GM12878 (cell line): ENCODE measurements at regions of chr4 and their contacts with region 1.

Region 1: GRCh38 chr4:153432968-153433753 is 33.0 kb upstream of the TMEM131L start:
- DNase-seq: peak; percentile 99
- ATAC-seq: peak; percentile 91
- H3K4me3 ChIP-seq: peak overlapping the region; percentile 56
- H3K27ac ChIP-seq: peak overlapping the region; percentile 84
- H3K4me1 ChIP-seq: peaks cover 31% of the 10 kb centered on the region
- H3K27me3 ChIP-seq: no peaks in the 10 kb centered on the region
- CTCF ChIP-seq: peak; percentile 86 to 96 (median 93)
- EP300 ChIP-seq: peak; percentile 78
- POLR2A ChIP-seq: peak; percentile 57
- RAD21 ChIP-seq: peak; percentile 99

Region 2: GRCh38 chr4:152719801-152720556 is 713.2 kb before region 1 on chr4:
- CTCF ChIA-PET with region 1: no interaction called
- POLR2A ChIA-PET with region 1: no interaction called
- RAD21 ChIA-PET with region 1: no interaction called
- SMC1A ChIA-PET with region 1: no interaction called
- in situ Hi-C with region 1: no loop called
- intact Hi-C with region 1: no loop called
- DNase-seq: no peak
- ATAC-seq: no peak
- H3K4me3 ChIP-seq: no peak overlapping the region
- H3K27ac ChIP-seq: no peak overlapping the region
- H3K4me1 ChIP-seq: no peaks in the 10 kb centered on the region
- H3K27me3 ChIP-seq: 0 out of 4 replicates have a peak, but pooled peaks cover 0 to 2% of the 10 kb centered on the region in 2 experiments
- CTCF ChIP-seq: no peak
- EP300 ChIP-seq: no peak
- POLR2A ChIP-seq: no peak
- RAD21 ChIP-seq: no peak

Region 3: GRCh38 chr4:153521999-153522801 is 89.0 kb after region 1 on chr4:
- CTCF ChIA-PET with region 1: interaction called, 7 read pairs
- POLR2A ChIA-PET with region 1: interaction called, 6 read pairs
- RAD21 ChIA-PET with region 1: interaction called, 9 read pairs
- SMC1A ChIA-PET with region 1: interaction called, 13 read pairs
- in situ Hi-C with region 1: no loop called
- intact Hi-C with region 1: loop called (anchors 1 kb)
- DNase-seq: peak; percentile 71
- ATAC-seq: peak; percentile 54
- H3K4me3 ChIP-seq: peak overlapping the region; percentile 59
- H3K27ac ChIP-seq: peak overlapping the region; percentile 96
- H3K4me1 ChIP-seq: peaks cover 85% of the 10 kb centered on the region
- H3K27me3 ChIP-seq: no peaks in the 10 kb centered on the region
- CTCF ChIP-seq: no peak
- EP300 ChIP-seq: no peak; a peak in 1 of 4 replicates
- POLR2A ChIP-seq: peak; percentile 56; the same call in 1 of the 2 replicates
- RAD21 ChIP-seq: no peak

Region 4: DNA sequence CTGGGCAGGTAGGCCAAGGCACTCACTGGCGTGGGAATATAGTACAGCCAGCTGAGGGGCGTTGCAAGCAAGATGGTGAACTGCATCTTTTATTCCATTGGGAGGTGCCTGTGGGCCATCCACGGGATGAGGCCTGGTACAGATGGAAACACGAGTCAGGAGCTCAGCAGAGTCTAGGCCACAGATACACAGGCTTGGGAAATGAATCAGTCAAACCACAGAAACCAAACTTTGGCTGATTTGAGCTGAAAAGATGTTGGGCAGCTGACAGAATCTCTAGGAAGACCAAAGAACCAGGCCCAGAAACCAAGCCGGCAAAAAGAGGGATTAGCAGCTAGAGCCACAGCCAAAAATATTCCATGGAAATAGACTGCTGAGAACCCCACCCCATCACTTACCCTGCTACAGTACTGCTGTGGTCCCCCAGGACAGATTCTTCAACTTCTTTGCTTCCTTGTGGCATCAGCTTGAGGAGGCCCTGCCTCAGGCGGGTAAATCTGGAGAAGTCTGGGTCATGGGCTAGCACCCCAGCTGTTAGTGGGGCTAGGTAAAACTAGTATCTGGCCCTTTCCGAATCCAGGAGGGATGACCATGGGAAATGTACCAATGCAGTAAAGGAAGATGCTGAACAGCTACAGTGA is 108.4 kb after region 1 on chr4:
- CTCF ChIA-PET with region 1: interaction called, 6 read pairs
- POLR2A ChIA-PET with region 1: interaction called, 4 read pairs
- RAD21 ChIA-PET with region 1: interaction called, 14 read pairs
- SMC1A ChIA-PET with region 1: interaction called, 10 read pairs
- in situ Hi-C with region 1: no loop called
- intact Hi-C with region 1: no loop called
- DNase-seq: no peak
- ATAC-seq: peak; percentile 64
- H3K4me3 ChIP-seq: no peak overlapping the region
- H3K27ac ChIP-seq: no peak overlapping the region
- H3K4me1 ChIP-seq: peaks cover 21% of the 10 kb centered on the region
- H3K27me3 ChIP-seq: no peaks in the 10 kb centered on the region
- CTCF ChIP-seq: no peak
- EP300 ChIP-seq: no peak
- POLR2A ChIP-seq: no peak
- RAD21 ChIP-seq: no peak

Region 5: DNA sequence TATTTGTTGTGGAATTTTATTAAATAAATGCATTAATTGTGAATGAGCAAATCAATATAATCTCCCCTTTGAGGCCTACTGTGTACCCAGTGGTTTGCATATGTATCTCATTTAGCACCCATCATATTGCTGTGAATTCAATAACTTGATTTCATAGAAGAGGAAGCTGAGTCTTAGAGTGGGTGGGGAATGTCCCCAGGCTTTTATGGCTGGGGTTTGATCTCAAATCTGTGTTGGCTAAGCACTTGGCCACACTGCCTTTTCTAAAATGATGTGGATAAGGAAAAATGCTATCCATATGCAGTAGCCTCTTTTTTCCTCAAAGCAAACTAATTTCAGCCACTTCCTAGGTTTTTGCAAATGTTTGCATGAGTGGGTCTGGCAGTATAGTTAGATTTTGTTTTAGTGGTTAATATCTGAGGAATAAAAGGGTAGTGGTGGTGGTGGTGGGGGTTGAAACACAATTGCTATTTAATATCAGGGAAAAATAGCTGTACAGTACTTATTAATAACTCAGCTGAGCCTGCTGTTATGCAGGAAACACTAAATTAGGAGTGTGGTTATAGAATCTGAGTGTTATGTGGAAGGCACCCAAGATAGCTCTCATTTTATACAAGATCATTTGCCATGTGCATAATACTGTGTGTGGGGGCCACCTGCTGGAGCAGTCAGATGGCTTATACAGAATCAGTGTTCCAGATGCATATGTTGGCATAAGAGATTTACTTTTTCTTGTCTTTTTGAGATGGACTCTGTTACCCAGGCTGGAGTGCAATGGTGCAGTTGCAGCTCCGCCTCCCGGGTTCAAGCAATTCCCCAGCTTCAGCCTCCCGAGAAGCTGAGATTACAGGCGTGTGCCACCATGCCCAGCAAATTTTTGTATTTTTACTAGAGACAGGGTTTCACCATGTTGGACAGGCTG is 141.0 kb after region 1 on chr4:
- CTCF ChIA-PET with region 1: interaction called, 33 read pairs
- POLR2A ChIA-PET with region 1: interaction called, 4 read pairs
- RAD21 ChIA-PET with region 1: interaction called, 35 read pairs
- SMC1A ChIA-PET with region 1: interaction called, 48 read pairs
- in situ Hi-C with region 1: loop called (anchors 5 kb)
- intact Hi-C with region 1: loop called (anchors 1 kb)
- DNase-seq: no peak
- ATAC-seq: peak; percentile 60
- H3K4me3 ChIP-seq: no peak overlapping the region
- H3K27ac ChIP-seq: peak overlapping the region; percentile 48
- H3K4me1 ChIP-seq: peaks cover 50% of the 10 kb centered on the region
- H3K27me3 ChIP-seq: no peaks in the 10 kb centered on the region
- CTCF ChIP-seq: peak; percentile 41 to 65 (median 53)
- EP300 ChIP-seq: no peak
- POLR2A ChIP-seq: no peak
- RAD21 ChIP-seq: peak; percentile 81

Region 6: GRCh38 chr4:153649572-153649991 is 216.4 kb after region 1 on chr4:
- CTCF ChIA-PET with region 1: interaction called, 36 read pairs
- POLR2A ChIA-PET with region 1: no interaction called
- RAD21 ChIA-PET with region 1: interaction called, 33 read pairs
- SMC1A ChIA-PET with region 1: interaction called, 6 read pairs
- in situ Hi-C with region 1: no loop called
- intact Hi-C with region 1: no loop called
- DNase-seq: no peak
- ATAC-seq: peak; percentile 75
- H3K4me3 ChIP-seq: no peak overlapping the region
- H3K27ac ChIP-seq: no peak overlapping the region
- H3K4me1 ChIP-seq: no peaks in the 10 kb centered on the region
- H3K27me3 ChIP-seq: no peaks in the 10 kb centered on the region
- CTCF ChIP-seq: peak; percentile 39 to 50 (median 48); a peak in 5 of 6 replicates
- EP300 ChIP-seq: no peak
- POLR2A ChIP-seq: no peak
- RAD21 ChIP-seq: peak; percentile 62